B cell (primary cell): ENCODE measurements at regions of chr1 and their contacts with region 1.

Region 1: GRCh38 chr1:157626099-157626498 is 28.2 kb upstream of the FCRL4 start:
- DNase-seq: peak; percentile 72
- ATAC-seq: peak; percentile 49
- H3K4me3 ChIP-seq: no peak overlapping the region
- H3K4me3 Mint-ChIP-seq: no peak overlapping the region
- H3K27ac ChIP-seq: no peak overlapping the region
- H3K27ac Mint-ChIP-seq: no peak overlapping the region
- H3K4me1 ChIP-seq: peaks cover 4 to 6% of the 10 kb centered on the region in 2 donors
- H3K4me1 Mint-ChIP-seq: peaks cover 13% of the 10 kb centered on the region
- H3K27me3 ChIP-seq: no peaks in the 10 kb centered on the region
- H3K27me3 Mint-ChIP-seq: no peaks in the 10 kb centered on the region
- CTCF ChIP-seq: peak; percentile 75

Region 2: GRCh38 chr1:157595356-157595755 is 30.7 kb before region 1 on chr1:
- CTCF ChIA-PET with region 1: interaction called, 3 read pairs
- POLR2A ChIA-PET with region 1: interaction called, 3 read pairs
- intact Hi-C with region 1: loop called (anchors 5 kb)
- DNase-seq: peak; percentile 67
- ATAC-seq: peak; percentile 80
- H3K4me3 ChIP-seq: no peak overlapping the region
- H3K4me3 Mint-ChIP-seq: peak overlapping the region; percentile 44
- H3K27ac ChIP-seq: no peak overlapping the region
- H3K27ac Mint-ChIP-seq: peak overlapping the region; percentile 12
- H3K4me1 ChIP-seq: peaks cover 38 to 41% of the 10 kb centered on the region in 2 donors
- H3K4me1 Mint-ChIP-seq: peaks cover 41% of the 10 kb centered on the region
- H3K27me3 ChIP-seq: peaks cover 0 to 22% (median 8%) of the 10 kb centered on the region in 4 experiments
- H3K27me3 Mint-ChIP-seq: peaks cover 4% of the 10 kb centered on the region
- CTCF ChIP-seq: no peak

Region 3: DNA sequence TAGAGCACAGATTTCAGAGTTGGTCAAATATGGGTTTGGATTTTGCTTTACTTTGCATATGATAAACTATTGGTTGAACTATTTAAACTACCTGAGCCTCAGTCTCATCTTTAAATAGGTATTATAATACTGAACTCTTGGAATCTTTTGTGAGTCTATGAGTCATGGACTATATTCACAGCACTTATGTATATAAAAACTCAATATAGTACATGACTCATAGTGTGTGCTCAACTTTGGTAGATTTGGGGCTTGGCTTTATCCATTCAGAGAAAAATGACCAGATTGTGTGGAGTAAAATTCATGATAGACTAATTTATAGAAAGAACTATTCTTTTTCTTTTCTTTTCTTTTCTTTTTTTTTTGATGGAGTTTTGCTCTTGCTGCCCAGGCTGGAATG is 45.8 kb after region 1 on chr1:
- CTCF ChIA-PET with region 1: no interaction called
- POLR2A ChIA-PET with region 1: interaction called, 14 read pairs
- intact Hi-C with region 1: no loop called
- DNase-seq: no peak
- ATAC-seq: no peak
- H3K4me3 ChIP-seq: no peak overlapping the region
- H3K4me3 Mint-ChIP-seq: no peak overlapping the region
- H3K27ac ChIP-seq: no peak overlapping the region
- H3K27ac Mint-ChIP-seq: no peak overlapping the region
- H3K4me1 ChIP-seq: no peaks in the 10 kb centered on the region
- H3K4me1 Mint-ChIP-seq: no peaks in the 10 kb centered on the region
- H3K27me3 ChIP-seq: no peaks in the 10 kb centered on the region
- H3K27me3 Mint-ChIP-seq: no peaks in the 10 kb centered on the region
- CTCF ChIP-seq: no peak